PC-3 (cell line): ENCODE measurements at regions of chr5 and their contacts with region 1.

Region 1: GRCh38 chr5:43699910-43700309 is 96.9 kb downstream of the NNT start:
- DNase-seq: no peak
- ATAC-seq: no peak
- H3K4me3 ChIP-seq: no peak overlapping the region
- H3K27ac ChIP-seq: no peak overlapping the region
- H3K4me1 ChIP-seq: no peaks in the 10 kb centered on the region
- H3K27me3 ChIP-seq: no peaks in the 10 kb centered on the region
- CTCF ChIP-seq: no peak

Region 2: GRCh38 chr5:43619380-43619779 is 80.5 kb before region 1 on chr5:
- CTCF ChIA-PET with region 1: no interaction called
- POLR2A ChIA-PET with region 1: no interaction called
- intact Hi-C with region 1: no loop called
- DNase-seq: no peak
- ATAC-seq: no peak
- H3K4me3 ChIP-seq: no peak overlapping the region
- H3K27ac ChIP-seq: no peak overlapping the region
- H3K4me1 ChIP-seq: no peaks in the 10 kb centered on the region
- H3K27me3 ChIP-seq: no peaks in the 10 kb centered on the region
- CTCF ChIP-seq: no peak

Region 3: DNA sequence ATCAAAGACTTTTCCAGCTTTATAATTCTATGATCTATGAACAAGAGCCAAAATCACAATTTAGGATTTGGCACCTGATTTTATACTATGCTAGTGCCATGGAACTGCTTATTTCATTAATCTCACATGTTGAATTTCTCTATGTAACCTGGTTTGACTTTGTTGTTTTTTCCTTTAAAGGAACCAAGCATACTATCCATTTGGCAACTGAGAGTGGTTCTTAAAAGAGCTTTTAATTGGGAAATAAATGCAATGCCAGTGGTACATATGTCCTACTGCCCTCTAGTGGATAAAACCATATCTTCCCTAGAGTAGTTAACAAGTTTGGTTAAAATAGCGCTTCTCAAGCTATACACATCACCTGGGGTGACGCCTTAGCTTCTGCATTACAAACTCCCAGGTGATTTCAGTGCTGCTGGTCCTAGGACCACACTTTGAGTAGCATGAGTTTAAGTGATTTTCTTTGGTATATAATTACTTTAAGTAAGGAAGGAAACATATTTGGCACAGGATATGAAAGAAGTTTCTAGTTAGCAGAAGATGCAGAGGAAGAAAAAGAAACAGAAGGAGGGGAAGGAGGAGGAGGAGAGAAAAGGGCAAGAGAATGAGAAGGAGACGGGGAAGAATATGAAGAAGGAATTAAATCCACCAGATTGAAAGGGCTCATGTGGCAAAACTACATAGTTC is 632.5 kb after region 1 on chr5:
- CTCF ChIA-PET with region 1: interaction called, 10 read pairs
- POLR2A ChIA-PET with region 1: no interaction called
- intact Hi-C with region 1: no loop called
- DNase-seq: peak; percentile 82
- ATAC-seq: peak; percentile 65
- H3K4me3 ChIP-seq: no peak overlapping the region
- H3K27ac ChIP-seq: no peak overlapping the region
- H3K4me1 ChIP-seq: no peaks in the 10 kb centered on the region
- H3K27me3 ChIP-seq: peaks cover 17% of the 10 kb centered on the region
- CTCF ChIP-seq: peak; percentile 91